HCT116 (cell line): ENCODE measurements at regions of chr1 and their contacts with region 1.

Region 1: GRCh38 chr1:29181413-29182225 is at the start of gene SRSF4:
- DNase-seq: peak; percentile 94
- ATAC-seq: peak; percentile 96
- H3K4me3 ChIP-seq: peak within 1 kb of the TSS; percentile 92 to 93
- H3K27ac ChIP-seq: peak within 1 kb of the TSS; percentile 96
- H3K4me1 ChIP-seq: peaks cover 14 to 20% of the 10 kb centered on the region in 2 experiments
- H3K27me3 ChIP-seq: no peaks in the 10 kb centered on the region
- CTCF ChIP-seq: peak; percentile 41 to 62 (median 47); a peak in 5 of 6 replicates
- POLR2A ChIP-seq: peak; percentile 62
- RAD21 ChIP-seq: peak; percentile 41
- total RNA-seq, gene SRSF4: 69.0 TPM

Region 2: DNA sequence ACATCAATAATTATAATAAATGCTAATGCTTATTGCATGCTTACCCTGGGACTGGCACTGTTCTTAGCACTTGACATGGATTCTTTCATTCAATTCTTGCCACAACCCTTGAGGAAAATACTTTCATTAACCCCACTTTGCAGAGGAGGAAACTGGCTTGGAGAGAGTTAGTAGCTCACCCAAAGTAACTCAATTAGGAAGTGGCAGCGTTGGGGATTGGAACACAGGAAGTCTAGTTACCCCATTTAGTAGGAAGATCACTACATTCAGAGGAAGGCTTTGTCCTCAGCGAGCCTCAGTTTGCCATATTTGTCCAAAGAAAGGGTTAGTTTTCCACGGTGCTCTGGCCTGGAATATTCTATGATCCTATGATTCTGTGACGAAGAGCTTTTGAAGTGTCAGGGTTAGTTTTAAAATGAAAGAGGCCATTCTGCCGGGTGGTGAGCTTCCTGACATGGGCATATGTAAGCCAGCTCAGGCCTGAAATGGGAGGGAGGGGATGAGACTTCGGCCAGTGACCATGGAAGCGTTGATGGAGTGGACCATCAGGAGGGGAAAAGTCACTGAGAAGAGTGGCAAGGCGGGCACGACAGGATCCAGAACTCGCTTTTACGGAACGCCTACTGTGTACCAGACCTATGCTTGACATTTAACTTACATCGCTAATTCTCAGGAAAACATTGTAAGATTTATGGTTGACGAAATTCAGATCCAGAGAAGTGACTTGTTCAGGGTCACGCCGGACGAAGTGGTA is 295.5 kb before region 1 on chr1:
- CTCF ChIA-PET with region 1: interaction called, 9 read pairs
- POLR2A ChIA-PET with region 1: interaction called, 4 read pairs
- RAD21 ChIA-PET with region 1: no interaction called
- intact Hi-C with region 1: loop called (anchors 2 kb)
- DNase-seq: no peak
- ATAC-seq: no peak
- H3K4me3 ChIP-seq: peak overlapping the region in 1 of 2 experiments; percentile 95; a peak in 2 of 4 replicates
- H3K27ac ChIP-seq: no peak overlapping the region; the same call in 1 of the 2 replicates
- H3K4me1 ChIP-seq: peaks cover 23 to 56% of the 10 kb centered on the region in 2 experiments
- H3K27me3 ChIP-seq: no peaks in the 10 kb centered on the region
- CTCF ChIP-seq: no peak
- POLR2A ChIP-seq: no peak
- RAD21 ChIP-seq: no peak

Region 3: DNA sequence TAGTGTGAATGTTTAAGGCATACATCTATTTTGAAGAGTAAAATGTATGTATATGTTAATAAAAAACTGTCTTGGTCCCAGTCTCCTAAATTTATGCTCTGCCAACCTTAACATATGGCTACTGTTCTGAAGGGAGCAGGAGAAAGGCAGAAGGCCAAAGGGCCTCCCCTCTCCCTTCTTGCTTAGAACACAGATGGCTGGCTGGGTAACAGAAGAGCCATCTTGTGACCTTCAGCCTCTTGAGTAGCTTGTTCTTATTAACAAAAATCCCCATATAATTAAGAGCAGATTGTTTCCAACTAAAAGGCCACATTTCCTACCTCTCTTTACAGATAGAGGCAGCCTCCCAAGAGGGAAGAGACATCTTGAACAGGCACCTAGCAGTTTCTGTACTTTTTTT is 231.2 kb before region 1 on chr1:
- CTCF ChIA-PET with region 1: no interaction called
- POLR2A ChIA-PET with region 1: no interaction called
- RAD21 ChIA-PET with region 1: no interaction called
- intact Hi-C with region 1: no loop called
- DNase-seq: no peak
- ATAC-seq: no peak
- H3K4me3 ChIP-seq: no peak overlapping the region
- H3K27ac ChIP-seq: no peak overlapping the region
- H3K4me1 ChIP-seq: peaks cover 0 to 1% of the 10 kb centered on the region in 2 experiments; a peak in 2 of 4 replicates
- H3K27me3 ChIP-seq: no peaks in the 10 kb centered on the region
- CTCF ChIP-seq: no peak
- POLR2A ChIP-seq: no peak
- RAD21 ChIP-seq: no peak

Region 4: DNA sequence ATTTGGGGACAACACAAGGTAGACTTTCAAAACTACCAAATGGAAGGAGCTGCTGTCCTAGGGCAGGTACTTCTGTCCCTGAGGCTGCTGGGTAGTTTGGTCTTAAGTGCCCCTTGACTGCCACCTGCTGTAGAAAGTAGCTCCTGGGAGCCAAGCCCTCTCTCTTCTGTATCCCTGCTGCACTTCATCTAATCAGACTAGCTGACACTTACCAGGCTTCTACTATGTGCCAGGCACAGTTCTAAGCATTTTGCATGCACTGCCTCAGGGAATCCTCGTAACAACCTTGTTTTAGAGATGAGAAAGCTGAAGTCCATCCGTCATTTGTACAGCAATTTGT is 15.9 kb after region 1 on chr1:
- CTCF ChIA-PET with region 1: interaction called, 14 read pairs
- POLR2A ChIA-PET with region 1: interaction called, 11 read pairs
- RAD21 ChIA-PET with region 1: no interaction called
- intact Hi-C with region 1: no loop called
- DNase-seq: peak; percentile 45
- ATAC-seq: peak; percentile 98
- H3K4me3 ChIP-seq: no peak overlapping the region
- H3K27ac ChIP-seq: no peak overlapping the region
- H3K4me1 ChIP-seq: peaks cover 6 to 11% of the 10 kb centered on the region in 2 experiments
- H3K27me3 ChIP-seq: no peaks in the 10 kb centered on the region
- CTCF ChIP-seq: peak; percentile 60 to 67 (median 60)
- POLR2A ChIP-seq: no peak
- RAD21 ChIP-seq: peak; percentile 76

Region 5: GRCh38 chr1:29202584-29203340 is 21.1 kb after region 1 on chr1:
- CTCF ChIA-PET with region 1: interaction called, 14 read pairs
- POLR2A ChIA-PET with region 1: interaction called, 5 read pairs
- RAD21 ChIA-PET with region 1: no interaction called
- intact Hi-C with region 1: no loop called
- DNase-seq: peak; percentile 94
- ATAC-seq: peak; percentile 96
- H3K4me3 ChIP-seq: peak overlapping the region in 1 of 2 experiments; percentile 2; a peak in 1 of 4 replicates
- H3K27ac ChIP-seq: peak overlapping the region; percentile 23; the same call in 1 of the 2 replicates
- H3K4me1 ChIP-seq: peaks cover 7 to 8% of the 10 kb centered on the region in 2 experiments
- H3K27me3 ChIP-seq: no peaks in the 10 kb centered on the region
- CTCF ChIP-seq: peak; percentile 90 to 98 (median 98)
- POLR2A ChIP-seq: no peak
- RAD21 ChIP-seq: peak; percentile 98